ENCODE measurements at regions of chr19 and their contacts with region 1.

Region 1: DNA sequence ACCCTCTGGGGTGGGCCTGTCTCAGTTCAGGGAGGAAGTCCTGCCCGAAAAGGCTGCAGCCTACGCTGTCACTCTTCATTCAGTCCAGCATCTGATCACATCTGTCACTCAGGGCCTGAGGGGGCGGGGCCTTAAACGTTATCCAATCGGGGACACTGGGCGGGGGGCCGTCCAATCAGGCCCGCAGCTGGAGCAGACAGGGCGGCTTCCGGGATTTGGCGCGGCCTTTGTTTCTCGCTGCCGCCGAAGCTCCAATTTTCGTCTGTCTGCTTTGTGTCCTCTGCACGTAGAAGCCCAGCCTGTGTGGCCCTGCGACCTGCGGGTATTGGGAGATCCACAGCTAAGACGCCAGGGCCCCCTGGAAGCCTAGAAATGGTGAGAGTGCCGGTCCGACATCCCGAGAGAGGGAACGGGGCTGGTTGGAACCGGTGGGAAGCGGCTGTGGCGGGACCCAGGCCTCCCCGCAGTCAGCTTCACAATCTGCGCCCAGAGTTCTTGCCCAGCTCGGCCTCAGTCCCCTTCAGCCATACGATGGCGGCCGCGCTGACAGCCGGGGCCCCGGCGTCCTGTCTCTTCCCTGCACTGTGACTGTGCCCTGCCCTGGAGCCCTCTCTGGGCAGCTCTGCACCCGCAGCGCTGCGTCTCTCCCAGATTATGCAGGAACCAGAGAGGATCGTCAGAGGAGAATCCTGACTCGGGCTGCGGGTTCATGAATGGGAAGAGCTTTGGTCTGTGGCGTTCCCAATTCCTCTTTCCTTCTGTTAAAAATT is at the start of gene ZNF730:
- DNase-seq: peak; percentile 34 to 84
- ATAC-seq: peak; percentile 93 to 100 (median 95)
- H3K4me3 ChIP-seq: peak within 1 kb of the TSS; percentile 51
- H3K4me3 Mint-ChIP-seq: peak within 1 kb of the TSS; percentile 91
- H3K27ac ChIP-seq: no peak within 1 kb of the TSS
- H3K27ac Mint-ChIP-seq: peak within 1 kb of the TSS; percentile 66 to 86
- H3K4me1 ChIP-seq: peaks cover 6% of the 10 kb centered on the region
- H3K4me1 Mint-ChIP-seq: peaks cover 0 to 15% of the 10 kb centered on the region in 2 donors
- H3K27me3 ChIP-seq: no peaks in the 10 kb centered on the region
- H3K27me3 Mint-ChIP-seq: no peaks in the 10 kb centered on the region
- CTCF ChIP-seq: no peak
- total RNA-seq, gene ZNF730: 0.15 to 0.34 TPM in 2 of 3 donors, not detected in the other

Region 2: GRCh38 chr19:21568816-21569493 is 1548.0 kb before region 1 on chr19:
- intact Hi-C with region 1: loop called (anchors 5 kb)
- DNase-seq: peak; percentile 72 to 96
- ATAC-seq: peak; percentile 96 to 99 (median 97)
- H3K4me3 ChIP-seq: peak overlapping the region; percentile 39
- H3K4me3 Mint-ChIP-seq: peak overlapping the region; percentile 100
- H3K27ac ChIP-seq: peak overlapping the region; percentile 46
- H3K27ac Mint-ChIP-seq: peak overlapping the region; percentile 93 to 100
- H3K4me1 ChIP-seq: peaks cover 7% of the 10 kb centered on the region
- H3K4me1 Mint-ChIP-seq: peaks cover 4 to 33% of the 10 kb centered on the region in 2 donors
- H3K27me3 ChIP-seq: no peaks in the 10 kb centered on the region
- H3K27me3 Mint-ChIP-seq: no peaks in the 10 kb centered on the region
- CTCF ChIP-seq: no peak